ENCODE measurements at regions of chr2 and their contacts with region 1.

Region 1: DNA sequence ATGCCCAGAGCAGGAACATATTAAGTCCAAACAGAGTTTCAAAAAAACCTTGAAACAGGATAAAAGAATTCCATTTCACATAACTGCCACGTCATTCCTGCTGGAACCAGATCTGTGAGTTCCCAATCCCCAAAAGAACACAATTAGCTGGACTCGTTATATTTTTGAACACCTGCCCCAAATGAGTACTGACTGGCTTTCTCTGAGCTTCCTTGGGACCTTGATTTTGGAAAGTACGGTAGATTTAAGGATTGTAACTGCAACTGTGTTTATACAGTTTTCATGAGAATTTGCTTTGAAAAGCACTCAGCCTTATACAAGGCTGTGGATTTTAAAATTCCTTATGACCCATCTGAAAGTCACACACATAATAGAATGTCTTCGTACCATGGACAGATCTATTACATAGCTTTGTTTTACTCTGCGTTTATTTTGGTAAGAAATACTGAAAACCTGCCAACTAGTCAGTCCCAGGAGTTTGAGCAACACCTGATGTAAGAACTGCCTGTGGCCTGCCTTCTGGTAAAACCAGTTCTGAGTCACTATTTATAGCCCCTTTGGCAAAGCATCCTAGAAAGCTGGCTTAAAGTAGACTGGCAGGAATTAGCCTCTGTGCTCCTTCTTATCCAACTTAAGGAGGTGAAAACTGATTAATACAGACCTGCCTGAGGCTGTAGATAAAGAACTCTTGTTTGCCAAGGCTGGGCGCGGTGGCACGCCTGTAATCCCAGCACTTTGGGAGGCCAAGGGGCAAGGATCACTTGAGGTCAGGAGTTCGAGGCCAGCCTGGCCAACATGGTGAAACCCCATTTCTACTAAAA is 48.1 kb downstream of the MERTK start:
- DNase-seq: peak in 1 of 2 donors; percentile 86
- H3K4me3 ChIP-seq: peak overlapping the region in 1 of 2 donors; percentile 31
- H3K27ac ChIP-seq: peak overlapping the region; percentile 90 to 97
- H3K4me1 ChIP-seq: peaks cover 16 to 21% of the 10 kb centered on the region in 2 donors
- H3K27me3 ChIP-seq: no peaks in the 10 kb centered on the region
- CTCF ChIP-seq: no peak

Region 2: GRCh38 chr2:111972955-111973565 is 26.6 kb after region 1 on chr2:
- intact Hi-C with region 1: loop called (anchors 1 kb)
- DNase-seq: peak; percentile 23 to 80
- H3K4me3 ChIP-seq: peak overlapping the region in 1 of 2 donors; percentile 47
- H3K27ac ChIP-seq: peak overlapping the region; percentile 86 to 94
- H3K4me1 ChIP-seq: peaks cover 10 to 28% of the 10 kb centered on the region in 2 donors
- H3K27me3 ChIP-seq: no peaks in the 10 kb centered on the region
- CTCF ChIP-seq: no peak

Region 3: GRCh38 chr2:112054847-112055729 is 108.6 kb after region 1 on chr2 and contains the start of gene TMEM87B:
- intact Hi-C with region 1: loop called (anchors 5 kb)
- DNase-seq: peak; percentile 88 to 98
- H3K4me3 ChIP-seq: peak within 1 kb of the TSS; percentile 78 to 98
- H3K27ac ChIP-seq: peak within 1 kb of the TSS; percentile 96 to 98
- H3K4me1 ChIP-seq: peaks cover 0 to 21% of the 10 kb centered on the region in 2 donors
- H3K27me3 ChIP-seq: no peaks in the 10 kb centered on the region
- CTCF ChIP-seq: no peak
- total RNA-seq, gene TMEM87B: 11.7 TPM

Measured in ascending aorta (tissue), 2 donors.